Activated T-helper 1 cell treated with anti-CD3 and anti-CD28 coated beads, Interleukin-12 subunit alpha, Interleukin-12 subunit beta, Interleukin-2, Interleukin-4 antibody, amounts not matched to agents 30 ng/mL and 10 ng/mL and 1 ng/mL, durations not matched to agents 14 hours and 24 hours and 36 hours (primary cell): ENCODE measurements at regions of chr5 and their contacts with region 1.

Region 1: DNA sequence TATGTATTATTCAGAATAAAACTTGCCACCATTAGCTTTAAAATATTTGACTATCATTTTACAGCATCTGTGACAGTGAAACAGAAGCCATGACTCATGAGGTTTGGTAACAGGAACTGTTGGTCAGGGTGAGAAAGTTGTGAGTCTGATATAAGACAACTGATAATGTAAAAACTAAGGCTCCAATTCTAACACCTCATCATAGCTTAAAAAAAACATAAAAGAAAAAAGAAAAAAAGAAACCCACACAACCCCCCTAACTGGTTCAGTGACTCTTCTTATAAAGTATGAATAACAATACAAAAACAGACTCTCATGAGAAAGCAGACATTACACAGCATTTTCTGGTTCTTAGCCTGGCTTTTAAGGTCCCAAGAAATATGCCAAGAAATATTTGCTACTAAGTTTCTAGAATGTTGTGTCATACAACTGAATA is 85.8 kb downstream of the MRPS27 start:
- DNase-seq: peak; percentile 12
- H3K4me3 Mint-ChIP-seq: peak overlapping the region; percentile 32
- H3K27ac Mint-ChIP-seq: no peak overlapping the region
- H3K4me1 Mint-ChIP-seq: peaks cover 29% of the 10 kb centered on the region
- H3K27me3 Mint-ChIP-seq: peaks cover 15% of the 10 kb centered on the region

Region 2: GRCh38 chr5:72138943-72139521 is 95.3 kb before region 1 on chr5:
- intact Hi-C with region 1: loop called (anchors 1 kb)
- DNase-seq: no peak
- H3K4me3 Mint-ChIP-seq: no peak overlapping the region
- H3K27ac Mint-ChIP-seq: no peak overlapping the region
- H3K4me1 Mint-ChIP-seq: peaks cover 12% of the 10 kb centered on the region
- H3K27me3 Mint-ChIP-seq: peaks cover 35% of the 10 kb centered on the region

Region 3: DNA sequence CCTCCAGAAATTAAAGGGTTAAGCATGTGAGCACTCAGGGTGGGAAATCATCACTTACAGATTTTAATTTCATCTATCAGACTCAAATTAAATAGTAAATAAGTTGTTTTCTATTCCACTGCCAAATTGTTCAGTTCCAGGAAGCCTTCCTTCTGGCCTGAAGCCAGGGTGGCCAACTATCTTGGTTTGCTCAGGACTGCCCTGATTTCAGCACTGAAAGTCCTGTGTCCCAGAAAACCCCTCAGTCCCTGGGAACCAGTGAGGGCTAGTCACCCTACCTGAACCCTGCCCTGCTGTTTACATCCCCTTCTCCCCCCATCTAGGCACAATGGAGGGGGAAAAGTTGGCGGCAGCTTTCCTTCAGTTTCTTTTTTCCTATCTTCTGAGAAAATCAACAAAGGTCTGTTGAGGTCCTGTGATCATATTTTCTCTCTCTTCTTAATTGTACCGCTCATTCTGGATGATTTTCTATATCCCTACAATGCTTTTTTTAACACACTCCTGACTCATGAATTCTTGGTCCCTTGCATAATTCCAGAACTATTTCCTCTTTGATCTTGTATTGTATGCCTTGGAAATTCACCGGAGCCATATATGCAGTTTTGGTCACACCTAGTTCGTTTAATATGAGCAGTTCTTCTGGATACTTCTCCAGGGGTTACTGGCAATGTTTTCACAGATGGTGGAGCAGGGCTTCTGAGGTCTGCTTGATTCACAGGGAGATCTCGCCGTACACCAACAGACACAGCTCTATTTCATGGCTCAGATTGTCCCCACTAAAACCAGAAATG is 23.2 kb before region 1 on chr5:
- intact Hi-C with region 1: no loop called
- DNase-seq: no peak
- H3K4me3 Mint-ChIP-seq: no peak overlapping the region
- H3K27ac Mint-ChIP-seq: no peak overlapping the region
- H3K4me1 Mint-ChIP-seq: no peaks in the 10 kb centered on the region
- H3K27me3 Mint-ChIP-seq: peaks cover 6% of the 10 kb centered on the region

Region 4: GRCh38 chr5:72244862-72245371 is 10.6 kb after region 1 on chr5:
- intact Hi-C with region 1: loop called (anchors 1 kb)
- DNase-seq: no peak
- H3K4me3 Mint-ChIP-seq: no peak overlapping the region
- H3K27ac Mint-ChIP-seq: no peak overlapping the region
- H3K4me1 Mint-ChIP-seq: peaks cover 11% of the 10 kb centered on the region
- H3K27me3 Mint-ChIP-seq: peaks cover 3% of the 10 kb centered on the region